ENCODE measurements at regions of chr1 and their contacts with region 1.

Region 1: DNA sequence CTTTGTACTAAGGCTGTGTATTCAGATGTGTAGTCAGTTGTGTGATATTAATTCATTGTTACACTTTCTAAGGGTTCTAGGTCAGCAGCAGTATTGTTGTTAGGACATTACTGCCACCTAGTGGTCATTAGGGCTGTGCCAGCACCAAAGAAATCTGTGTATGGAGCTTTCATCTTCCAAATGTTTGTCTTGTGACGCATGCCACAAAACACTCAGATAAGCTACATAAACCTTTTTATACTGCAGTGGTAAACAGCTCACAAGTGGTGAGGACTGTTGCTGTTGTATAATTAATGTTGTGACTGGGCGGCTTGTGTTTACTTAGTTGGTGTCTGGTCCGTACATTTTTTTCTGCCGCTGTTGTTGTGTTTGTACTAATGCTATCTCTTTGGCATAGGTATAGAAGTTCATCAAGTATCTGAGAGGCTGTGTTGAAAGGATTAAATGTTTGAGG is 51.7 kb downstream of the S1PR1 start:
- DNase-seq: no peak
- H3K4me3 ChIP-seq: no peak overlapping the region
- H3K27ac ChIP-seq: no peak overlapping the region
- H3K4me1 ChIP-seq: peaks cover 0 to 4% (median 2%) of the 10 kb centered on the region in 4 experiments; a peak in 2 of 7 replicates
- H3K27me3 ChIP-seq: no peaks in the 10 kb centered on the region
- CTCF ChIP-seq: peak in 2 of 3 experiments; percentile 66 to 88; a peak in 3 of 4 replicates
- EP300 ChIP-seq: no peak
- POLR2A ChIP-seq: no peak
- RAD21 ChIP-seq: peak; percentile 84 to 89

Region 2: DNA sequence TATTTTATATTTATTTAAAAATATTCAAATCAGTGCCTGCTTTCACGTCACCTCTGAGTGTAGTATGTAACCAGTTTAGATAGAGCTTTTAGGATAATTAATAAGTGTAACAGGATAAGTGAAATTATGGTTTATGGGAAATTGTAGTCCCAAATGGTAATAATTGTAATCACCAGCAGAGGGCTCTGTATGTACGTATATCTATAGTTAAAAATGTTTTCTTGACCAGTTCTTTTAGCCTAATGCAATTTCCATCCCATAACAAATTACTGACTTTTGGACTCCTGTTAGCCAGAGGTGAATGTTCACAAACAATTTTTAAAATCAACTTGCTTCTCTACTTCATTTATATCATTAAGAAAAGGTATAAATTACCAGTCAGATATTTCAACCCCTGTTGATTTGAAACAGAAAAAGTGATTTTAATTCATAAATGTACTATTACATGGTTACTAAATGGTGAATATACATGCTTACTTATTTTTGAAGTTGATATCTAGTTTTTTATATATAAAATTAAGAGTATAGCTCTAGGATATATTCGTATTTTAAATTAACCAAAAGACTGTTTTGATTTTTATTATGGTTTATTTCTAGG is 367.3 kb before region 1 on chr1:
- CTCF ChIA-PET with region 1: interaction called, 14 read pairs
- POLR2A ChIA-PET with region 1: no interaction called
- DNase-seq: no peak
- H3K4me3 ChIP-seq: no peak overlapping the region
- H3K27ac ChIP-seq: no peak overlapping the region
- H3K4me1 ChIP-seq: no peaks in the 10 kb centered on the region
- H3K27me3 ChIP-seq: no peaks in the 10 kb centered on the region
- CTCF ChIP-seq: peak in 2 of 3 experiments; percentile 16 to 48; a peak in 2 of 4 replicates
- EP300 ChIP-seq: no peak
- POLR2A ChIP-seq: no peak
- RAD21 ChIP-seq: peak; percentile 58 to 65

Region 3: GRCh38 chr1:101238681-101239094 is 49.8 kb before region 1 on chr1:
- CTCF ChIA-PET with region 1: interaction called, 41 read pairs
- POLR2A ChIA-PET with region 1: no interaction called
- DNase-seq: peak; percentile 59 to 96
- H3K4me3 ChIP-seq: peak overlapping the region in 1 of 4 experiments; percentile 58; a peak in 1 of 8 replicates
- H3K27ac ChIP-seq: no peak overlapping the region
- H3K4me1 ChIP-seq: peaks cover 0 to 10% (median 6%) of the 10 kb centered on the region in 4 experiments; a peak in 5 of 7 replicates
- H3K27me3 ChIP-seq: peaks cover 0 to 27% (median 13%) of the 10 kb centered on the region in 4 experiments; a peak in 5 of 7 replicates
- CTCF ChIP-seq: peak; percentile 83 to 93 (median 89)
- EP300 ChIP-seq: no peak
- POLR2A ChIP-seq: no peak
- RAD21 ChIP-seq: peak; percentile 77 to 82

Region 4: GRCh38 chr1:101264697-101265096 is 23.8 kb before region 1 on chr1:
- CTCF ChIA-PET with region 1: interaction called, 40 read pairs
- POLR2A ChIA-PET with region 1: no interaction called
- DNase-seq: no peak
- H3K4me3 ChIP-seq: no peak overlapping the region
- H3K27ac ChIP-seq: no peak overlapping the region
- H3K4me1 ChIP-seq: peaks cover 0 to 4% (median 0%) of the 10 kb centered on the region in 4 experiments; a peak in 1 of 7 replicates
- H3K27me3 ChIP-seq: no peaks in the 10 kb centered on the region
- CTCF ChIP-seq: no peak
- EP300 ChIP-seq: no peak
- POLR2A ChIP-seq: no peak
- RAD21 ChIP-seq: no peak

Region 5: DNA sequence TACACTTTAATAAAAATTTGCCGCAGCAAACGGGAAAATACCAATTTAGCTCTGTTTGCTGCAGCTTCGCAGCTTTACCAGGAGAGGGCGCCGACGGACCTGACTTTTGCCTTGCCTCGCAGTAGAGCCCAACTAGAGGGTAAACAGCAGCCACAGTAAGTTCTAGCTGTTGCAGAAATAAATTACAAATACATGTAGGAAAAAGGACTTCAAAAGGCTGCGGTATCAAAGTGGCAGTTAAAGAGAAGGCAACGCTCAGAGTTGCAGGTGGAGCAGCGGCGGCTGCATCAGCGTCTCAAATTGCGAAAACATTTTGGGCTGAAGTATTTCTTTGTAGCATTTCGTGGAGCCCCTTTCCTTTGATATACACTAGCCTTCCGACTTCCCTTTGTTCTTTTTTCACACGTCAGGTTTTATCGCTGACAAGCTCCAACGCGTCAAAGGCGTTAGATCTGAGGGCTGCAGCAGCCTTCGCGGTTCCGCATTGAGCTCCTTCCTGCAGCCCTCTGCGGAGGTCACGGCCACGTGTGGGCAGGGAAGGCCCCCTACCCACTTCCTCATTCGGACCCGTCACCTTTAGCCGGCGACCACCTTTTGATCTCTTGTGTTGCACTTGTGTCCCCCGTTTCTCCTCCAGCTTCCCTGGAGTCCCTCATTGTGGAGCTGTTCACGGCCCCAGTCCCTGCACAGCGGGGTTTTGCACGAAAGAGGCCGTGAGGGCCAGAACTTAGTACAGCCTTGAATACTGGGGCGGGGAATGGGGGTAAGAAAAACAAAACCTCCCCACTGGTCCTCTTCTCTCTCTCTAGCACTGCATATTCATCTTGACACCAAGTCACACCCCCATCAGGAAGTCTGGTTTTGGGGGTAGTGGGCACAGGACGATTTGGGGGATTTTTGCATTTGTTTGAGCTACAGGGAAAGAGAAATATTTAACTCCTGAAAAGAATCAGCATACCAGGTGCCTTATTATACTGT is 21.1 kb after region 1 on chr1:
- CTCF ChIA-PET with region 1: interaction called, 15 read pairs
- POLR2A ChIA-PET with region 1: no interaction called
- DNase-seq: peak in 1 of 2 experiments; percentile 70
- H3K4me3 ChIP-seq: peak overlapping the region; percentile 36 to 60 (median 52); a peak in 7 of 8 replicates
- H3K27ac ChIP-seq: no peak overlapping the region
- H3K4me1 ChIP-seq: peaks cover 0 to 7% (median 3%) of the 10 kb centered on the region in 4 experiments; a peak in 4 of 7 replicates
- H3K27me3 ChIP-seq: no peaks in the 10 kb centered on the region
- CTCF ChIP-seq: peak; percentile 77 to 82 (median 81)
- EP300 ChIP-seq: no peak
- POLR2A ChIP-seq: no peak
- RAD21 ChIP-seq: peak; percentile 81 to 86